Activated CD4-positive, alpha-beta T cell treated with anti-CD3 and anti-CD28 coated beads for 36 hours (primary cell): ENCODE measurements at regions of chr1 and their contacts with region 1.

Region 1: DNA sequence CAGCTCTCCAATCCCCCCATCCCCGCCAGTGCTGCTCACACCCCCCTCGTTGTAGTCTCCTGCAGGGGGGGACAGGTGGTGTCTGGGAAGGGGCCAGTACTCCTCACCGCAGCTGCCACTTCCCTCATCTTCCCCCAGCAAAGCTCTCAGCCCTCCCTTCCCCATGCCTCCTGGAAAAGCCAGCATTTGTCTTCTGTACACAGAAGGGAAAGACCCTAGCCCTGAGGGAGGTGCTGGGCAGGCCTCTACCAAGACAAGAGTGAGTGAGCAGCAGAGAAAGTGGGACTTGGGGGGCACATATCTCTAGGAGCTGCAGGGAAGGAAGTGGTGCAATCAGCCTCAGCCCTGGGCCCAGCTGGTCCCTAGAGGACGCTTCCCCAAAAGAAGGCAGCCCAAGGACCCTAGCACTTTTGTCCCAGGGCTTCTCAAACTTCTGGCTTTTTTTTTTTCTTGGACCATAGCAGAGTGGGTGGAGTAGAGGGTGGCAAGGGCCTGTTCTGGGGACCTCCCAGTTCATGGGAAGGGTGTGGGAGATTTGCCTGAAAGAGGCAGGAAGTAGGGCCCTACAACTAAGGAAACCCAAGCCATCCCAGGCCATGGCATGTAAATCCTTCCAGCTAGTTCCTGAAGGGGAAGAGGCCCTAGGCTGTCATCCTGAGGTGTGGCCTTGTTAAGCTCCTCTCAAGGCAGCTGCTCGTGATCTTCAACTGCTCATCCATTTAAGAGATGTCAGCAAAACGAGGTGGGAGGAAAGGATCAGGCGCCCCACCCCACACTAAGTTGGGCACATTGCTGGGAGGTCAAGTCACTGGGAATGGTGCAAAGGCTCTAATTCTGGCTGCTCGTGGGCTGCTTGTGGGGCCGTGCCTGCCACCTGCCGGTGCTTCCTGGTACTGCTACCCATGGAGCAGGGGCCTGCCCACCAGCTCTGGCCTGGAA is 12.6 kb downstream of the ZC3H12A start:
- DNase-seq: peak; percentile 87
- ATAC-seq: peak; percentile 74
- H3K4me3 Mint-ChIP-seq: no peak overlapping the region
- H3K27ac Mint-ChIP-seq: peak overlapping the region; percentile 56
- H3K4me1 Mint-ChIP-seq: peaks cover 17% of the 10 kb centered on the region
- H3K27me3 Mint-ChIP-seq: no peaks in the 10 kb centered on the region

Region 2: GRCh38 chr1:37449936-37450335 is 37.0 kb before region 1 on chr1:
- CTCF ChIA-PET with region 1: interaction called, 194 read pairs
- POLR2A ChIA-PET with region 1: no interaction called
- intact Hi-C with region 1: loop called (anchors 1 kb)
- DNase-seq: peak; percentile 66
- ATAC-seq: peak; percentile 68
- H3K4me3 Mint-ChIP-seq: no peak overlapping the region
- H3K27ac Mint-ChIP-seq: no peak overlapping the region
- H3K4me1 Mint-ChIP-seq: peaks cover 12% of the 10 kb centered on the region
- H3K27me3 Mint-ChIP-seq: peaks cover 7% of the 10 kb centered on the region

Region 3: GRCh38 chr1:37465593-37466517 is 21.1 kb before region 1 on chr1:
- CTCF ChIA-PET with region 1: interaction called, 194 read pairs
- POLR2A ChIA-PET with region 1: interaction called, 5 read pairs
- intact Hi-C with region 1: no loop called
- DNase-seq: no peak
- ATAC-seq: no peak
- H3K4me3 Mint-ChIP-seq: no peak overlapping the region
- H3K27ac Mint-ChIP-seq: no peak overlapping the region
- H3K4me1 Mint-ChIP-seq: peaks cover 11% of the 10 kb centered on the region
- H3K27me3 Mint-ChIP-seq: no peaks in the 10 kb centered on the region

Region 4: DNA sequence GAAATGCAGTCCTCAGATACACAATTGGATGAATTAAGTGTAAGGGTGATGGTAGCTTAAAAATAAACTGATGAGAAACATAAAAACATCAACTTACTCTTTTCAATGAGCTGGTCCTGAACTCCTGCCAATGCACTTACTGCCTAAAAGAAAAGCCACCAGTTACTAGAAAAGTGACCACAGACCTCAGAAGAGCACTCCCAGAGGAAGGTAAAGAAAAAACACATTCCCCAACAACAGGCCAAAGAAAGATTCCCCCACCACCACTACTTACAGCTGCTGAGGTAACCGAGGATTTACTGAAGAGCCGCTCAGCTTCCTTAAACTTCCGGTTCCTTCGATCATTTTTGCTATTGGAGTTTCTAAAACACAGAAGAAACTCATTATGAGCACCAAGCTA is 22.2 kb after region 1 on chr1:
- CTCF ChIA-PET with region 1: interaction called, 21 read pairs
- POLR2A ChIA-PET with region 1: interaction called, 4 read pairs
- intact Hi-C with region 1: loop called in 1 of 2 experiments (anchors 2 kb)
- DNase-seq: no peak
- ATAC-seq: no peak
- H3K4me3 Mint-ChIP-seq: no peak overlapping the region
- H3K27ac Mint-ChIP-seq: peak overlapping the region; percentile 78
- H3K4me1 Mint-ChIP-seq: peaks cover 42% of the 10 kb centered on the region
- H3K27me3 Mint-ChIP-seq: no peaks in the 10 kb centered on the region

Region 5: GRCh38 chr1:37682334-37682987 is 195.5 kb after region 1 on chr1:
- CTCF ChIA-PET with region 1: interaction called, 10 read pairs
- POLR2A ChIA-PET with region 1: no interaction called
- intact Hi-C with region 1: no loop called
- DNase-seq: peak; percentile 87
- ATAC-seq: peak; percentile 89
- H3K4me3 Mint-ChIP-seq: no peak overlapping the region
- H3K27ac Mint-ChIP-seq: peak overlapping the region; percentile 60
- H3K4me1 Mint-ChIP-seq: peaks cover 3% of the 10 kb centered on the region
- H3K27me3 Mint-ChIP-seq: no peaks in the 10 kb centered on the region